ENCODE measurements at regions of chr3 and their contacts with region 1.

Region 1: DNA sequence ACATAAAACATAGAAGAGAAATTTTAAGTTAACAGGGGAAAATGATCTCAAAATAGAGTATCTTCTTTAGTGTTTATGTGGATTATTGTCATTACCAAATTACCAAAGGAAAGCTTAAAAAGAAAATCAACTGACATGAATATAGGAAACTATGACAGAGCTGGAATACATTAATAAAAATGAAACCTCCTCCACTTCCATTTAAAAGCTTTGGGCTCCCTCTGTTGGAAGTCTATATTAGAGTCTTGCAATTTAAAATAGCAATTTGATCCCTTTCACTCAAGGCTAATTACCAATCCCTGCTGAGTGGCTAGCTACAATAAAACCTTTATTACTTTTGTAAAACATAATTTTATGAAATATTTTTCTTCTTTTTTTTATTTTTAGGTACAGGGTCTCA is 61.4 kb upstream of the IMPG2 start:
- DNase-seq: peak in 1 of 2 donors; percentile 59
- ATAC-seq: peak; percentile 45 to 59 (median 50)
- H3K4me3 ChIP-seq: no peak overlapping the region
- H3K4me3 Mint-ChIP-seq: no peak overlapping the region
- H3K27ac ChIP-seq: no peak overlapping the region
- H3K27ac Mint-ChIP-seq: peak overlapping the region; percentile 24 to 63
- H3K4me1 ChIP-seq: peaks cover 4% of the 10 kb centered on the region
- H3K4me1 Mint-ChIP-seq: peaks cover 30 to 48% of the 10 kb centered on the region in 2 donors
- H3K27me3 ChIP-seq: no peaks in the 10 kb centered on the region
- H3K27me3 Mint-ChIP-seq: no peaks in the 10 kb centered on the region
- CTCF ChIP-seq: peak; percentile 45

Region 2: GRCh38 chr3:100316641-100317069 is 1065.2 kb before region 1 on chr3:
- intact Hi-C with region 1: loop called (anchors 5 kb)
- DNase-seq: peak in 1 of 2 donors; percentile 77
- ATAC-seq: peak; percentile 79 to 92 (median 92)
- H3K4me3 ChIP-seq: no peak overlapping the region
- H3K4me3 Mint-ChIP-seq: no peak overlapping the region
- H3K27ac ChIP-seq: no peak overlapping the region
- H3K27ac Mint-ChIP-seq: peak overlapping the region; percentile 69 to 79
- H3K4me1 ChIP-seq: peaks cover 4% of the 10 kb centered on the region
- H3K4me1 Mint-ChIP-seq: peaks cover 11 to 13% of the 10 kb centered on the region in 2 donors
- H3K27me3 ChIP-seq: no peaks in the 10 kb centered on the region
- H3K27me3 Mint-ChIP-seq: no peaks in the 10 kb centered on the region
- CTCF ChIP-seq: peak; percentile 77

Region 3: GRCh38 chr3:101069901-101070798 is 311.7 kb before region 1 on chr3:
- intact Hi-C with region 1: loop called (anchors 1 kb)
- DNase-seq: peak; percentile 19 to 71
- ATAC-seq: peak; percentile 49 to 60 (median 58)
- H3K4me3 ChIP-seq: no peak overlapping the region
- H3K4me3 Mint-ChIP-seq: no peak overlapping the region
- H3K27ac ChIP-seq: no peak overlapping the region
- H3K27ac Mint-ChIP-seq: no peak overlapping the region
- H3K4me1 ChIP-seq: no peaks in the 10 kb centered on the region
- H3K4me1 Mint-ChIP-seq: no peaks in the 10 kb centered on the region
- H3K27me3 ChIP-seq: no peaks in the 10 kb centered on the region
- H3K27me3 Mint-ChIP-seq: peaks cover 2 to 10% of the 10 kb centered on the region in 2 donors
- CTCF ChIP-seq: peak; percentile 23

Region 4: DNA sequence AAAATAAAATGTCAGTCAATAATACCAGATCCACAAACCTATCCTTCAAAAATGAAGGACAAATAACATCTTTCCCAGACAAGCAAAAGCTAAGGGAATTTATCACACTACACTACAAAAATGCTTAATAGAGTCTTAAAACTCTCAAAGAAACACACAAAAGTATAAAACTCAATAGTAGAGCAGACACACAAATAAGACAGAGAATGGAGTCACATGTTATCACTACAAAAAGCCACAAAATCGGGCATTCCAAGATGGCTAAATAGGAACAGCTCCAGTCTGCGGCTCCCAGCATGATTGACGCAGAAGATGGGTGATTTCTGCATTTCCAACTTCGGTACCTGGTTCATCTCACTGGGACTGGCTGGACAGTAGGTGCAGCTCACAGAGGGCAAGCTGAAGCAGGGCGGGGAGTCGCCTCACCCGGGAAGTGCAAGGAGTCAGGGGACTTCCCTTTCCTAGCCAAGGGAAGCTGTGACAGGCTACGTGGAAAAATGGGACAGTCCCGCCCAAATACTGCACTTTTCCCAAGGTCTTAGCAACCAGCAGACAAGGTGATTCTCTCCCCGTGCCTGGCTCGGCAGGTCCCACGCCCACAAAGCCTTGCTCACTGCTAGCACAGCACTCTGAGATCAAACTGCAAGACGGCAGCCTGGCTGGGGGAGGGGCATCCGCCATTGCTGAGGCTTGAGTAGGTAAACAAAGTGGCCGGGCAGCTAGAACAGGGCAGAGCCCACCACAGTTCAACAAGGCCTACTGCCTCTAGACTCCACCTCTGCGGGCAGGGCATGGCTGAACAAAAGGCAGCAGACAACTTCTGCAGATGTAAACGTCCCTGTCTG is 84.9 kb after region 1 on chr3:
- intact Hi-C with region 1: no loop called
- DNase-seq: peak in 1 of 2 donors; percentile 74
- ATAC-seq: no peak
- H3K4me3 ChIP-seq: no peak overlapping the region
- H3K4me3 Mint-ChIP-seq: no peak overlapping the region
- H3K27ac ChIP-seq: no peak overlapping the region
- H3K27ac Mint-ChIP-seq: peak overlapping the region; percentile 1 to 28
- H3K4me1 ChIP-seq: peaks cover 7% of the 10 kb centered on the region
- H3K4me1 Mint-ChIP-seq: peaks cover 57 to 61% of the 10 kb centered on the region in 2 donors
- H3K27me3 ChIP-seq: no peaks in the 10 kb centered on the region
- H3K27me3 Mint-ChIP-seq: no peaks in the 10 kb centered on the region
- CTCF ChIP-seq: no peak

Region 5: GRCh38 chr3:101512646-101513418 is 131.0 kb after region 1 on chr3 and contains the start of gene SENP7:
- intact Hi-C with region 1: loop called (anchors 10 kb)
- DNase-seq: peak; percentile 65 to 91
- ATAC-seq: peak; percentile 59 to 74 (median 73)
- H3K4me3 ChIP-seq: peak within 1 kb of the TSS; percentile 89
- H3K4me3 Mint-ChIP-seq: peak within 1 kb of the TSS; percentile 98
- H3K27ac ChIP-seq: peak within 1 kb of the TSS; percentile 90
- H3K27ac Mint-ChIP-seq: peak within 1 kb of the TSS; percentile 96 to 99
- H3K4me1 ChIP-seq: peaks cover 11% of the 10 kb centered on the region
- H3K4me1 Mint-ChIP-seq: peaks cover 36 to 44% of the 10 kb centered on the region in 2 donors
- H3K27me3 ChIP-seq: no peaks in the 10 kb centered on the region
- H3K27me3 Mint-ChIP-seq: peaks cover 0 to 5% of the 10 kb centered on the region in 2 donors
- CTCF ChIP-seq: no peak
- total RNA-seq, gene SENP7: 41.4 to 60.6 (median 52.7) TPM